Activated CD4-positive, alpha-beta memory T cell treated with anti-CD3 and anti-CD28 coated beads, Interleukin-2, amount 10 ng/mL, durations not matched to agents 7 days and 5 days (primary cell): ENCODE measurements at regions of chr2 and their contacts with region 1.

Region 1: DNA sequence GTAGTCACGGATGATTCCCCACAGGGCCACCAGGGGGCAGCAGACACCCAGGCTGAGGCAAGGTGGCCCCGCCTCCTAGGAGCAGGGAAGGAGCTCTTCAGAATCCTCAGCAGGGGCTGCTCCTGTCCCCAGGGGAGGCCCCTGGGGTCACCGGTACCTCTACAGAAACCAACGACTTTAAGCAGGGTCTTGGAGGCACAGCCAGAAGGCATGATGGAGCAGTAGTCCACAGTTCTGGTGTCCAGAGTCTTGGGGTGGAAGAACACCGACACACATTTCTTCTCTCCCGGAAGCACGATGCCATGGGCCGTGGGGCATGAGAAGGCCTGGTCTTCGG is 11.5 kb downstream of the CFAP65 start:
- DNase-seq: peak; percentile 76
- H3K4me3 Mint-ChIP-seq: no peak overlapping the region
- H3K27ac Mint-ChIP-seq: no peak overlapping the region
- H3K4me1 Mint-ChIP-seq: no peaks in the 10 kb centered on the region
- H3K27me3 Mint-ChIP-seq: peaks cover 23% of the 10 kb centered on the region

Region 2: DNA sequence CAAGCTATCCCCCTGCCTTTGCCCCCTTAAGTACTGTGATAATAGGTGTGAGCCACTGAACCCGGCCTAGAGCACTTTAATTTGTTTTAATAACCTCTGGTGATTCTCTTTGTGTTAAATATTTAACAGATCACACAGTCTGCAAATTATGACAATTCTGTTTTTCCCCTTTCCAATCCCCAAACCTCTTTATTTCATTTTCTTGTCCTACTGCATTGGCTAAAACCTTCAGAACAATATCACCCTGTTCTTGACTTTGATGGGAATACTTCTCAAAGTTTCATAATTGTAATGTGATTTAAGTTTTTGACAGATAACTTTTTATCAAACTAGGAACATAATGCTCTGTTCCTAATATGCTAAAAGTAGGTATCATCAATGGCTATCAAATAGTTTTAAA is 506.1 kb before region 1 on chr2:
- CTCF ChIA-PET with region 1: no interaction called
- POLR2A ChIA-PET with region 1: no interaction called
- DNase-seq: no peak
- H3K4me3 Mint-ChIP-seq: no peak overlapping the region
- H3K27ac Mint-ChIP-seq: no peak overlapping the region
- H3K4me1 Mint-ChIP-seq: peaks cover 9% of the 10 kb centered on the region
- H3K27me3 Mint-ChIP-seq: no peaks in the 10 kb centered on the region

Region 3: DNA sequence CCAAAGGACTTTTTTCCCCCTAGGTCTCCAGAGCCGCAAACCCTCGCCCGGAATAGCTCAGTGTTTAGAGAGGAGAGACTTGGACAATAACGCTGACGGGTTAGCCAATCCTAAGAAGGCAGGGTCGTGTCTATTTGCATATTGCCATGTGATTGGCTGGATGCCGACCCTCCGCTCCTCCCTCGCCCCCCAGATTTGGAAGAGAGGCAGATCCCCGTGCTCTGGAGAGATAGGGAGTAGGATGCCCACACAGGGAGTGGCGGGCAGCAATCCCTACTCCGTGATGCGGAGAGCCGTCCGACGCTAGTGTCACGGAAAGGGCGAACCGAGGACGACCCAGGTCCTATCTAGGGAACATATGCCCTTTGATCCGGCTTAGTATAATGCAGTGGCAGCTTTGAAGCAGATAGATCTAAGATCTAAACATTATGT is 168.8 kb before region 1 on chr2:
- CTCF ChIA-PET with region 1: no interaction called
- POLR2A ChIA-PET with region 1: no interaction called
- DNase-seq: no peak
- H3K4me3 Mint-ChIP-seq: no peak overlapping the region
- H3K27ac Mint-ChIP-seq: no peak overlapping the region
- H3K4me1 Mint-ChIP-seq: peaks cover 5% of the 10 kb centered on the region
- H3K27me3 Mint-ChIP-seq: peaks cover 68% of the 10 kb centered on the region

Region 4: DNA sequence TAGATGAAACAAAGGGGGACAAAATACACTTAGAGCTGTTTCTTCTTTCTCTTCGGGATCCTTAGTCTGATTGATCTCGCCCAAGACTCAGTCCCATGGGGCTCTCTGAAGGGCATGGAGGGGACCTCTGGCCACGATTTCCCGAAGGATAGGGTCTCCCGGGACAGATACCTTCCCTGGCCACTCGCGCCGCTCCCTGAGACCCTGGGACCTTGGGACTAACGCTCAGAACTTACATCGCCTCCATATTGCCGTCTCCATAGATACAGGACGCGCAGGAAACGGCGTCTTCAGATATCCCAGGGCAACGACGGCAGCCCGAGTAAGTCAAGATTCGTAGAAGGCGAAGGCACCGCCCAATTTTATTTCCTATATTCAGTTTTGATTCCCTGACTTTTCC is 11.5 kb after region 1 on chr2 and contains the start of gene CFAP65:
- CTCF ChIA-PET with region 1: interaction called, 27 read pairs
- POLR2A ChIA-PET with region 1: no interaction called
- DNase-seq: peak; percentile 31
- H3K4me3 Mint-ChIP-seq: no peak within 1 kb of the TSS
- H3K27ac Mint-ChIP-seq: no peak within 1 kb of the TSS
- H3K4me1 Mint-ChIP-seq: peaks cover 4% of the 10 kb centered on the region
- H3K27me3 Mint-ChIP-seq: peaks cover 42% of the 10 kb centered on the region
- total RNA-seq, gene CFAP65: not detected